Mammary epithelial cell (primary cell): ENCODE measurements at regions of chr15 and their contacts with region 1.

Region 1: DNA sequence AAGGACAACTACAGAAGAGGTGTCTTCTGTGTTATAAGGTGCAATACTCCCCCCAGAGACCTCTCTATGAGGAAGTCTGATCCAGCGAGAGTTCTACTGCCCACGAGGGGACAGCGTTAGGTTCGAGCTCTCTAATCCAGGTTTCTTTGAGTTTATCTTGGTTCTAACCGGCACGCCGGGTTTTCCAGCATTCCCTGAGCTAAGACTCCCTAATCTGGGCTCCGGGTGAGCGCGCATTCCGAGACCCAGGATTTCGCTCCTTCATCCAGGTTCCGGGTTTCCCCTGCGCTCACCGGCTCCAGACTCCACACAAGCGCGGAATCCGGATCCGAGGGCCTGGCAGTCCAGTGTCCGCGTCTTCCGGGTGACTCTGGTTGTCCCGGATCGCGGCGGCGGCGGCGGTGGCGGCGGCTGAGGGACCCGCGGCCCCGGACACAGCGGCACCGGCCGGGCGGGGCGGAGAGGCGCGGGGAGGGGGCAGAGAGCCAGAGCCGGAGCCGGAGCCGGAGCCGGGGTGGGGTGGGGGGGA is at the start of gene ZNF609:
- DNase-seq: peak; percentile 94
- H3K4me3 ChIP-seq: peak within 1 kb of the TSS; percentile 51 to 67 (median 63)
- H3K27ac ChIP-seq: peak within 1 kb of the TSS; percentile 39
- H3K4me1 ChIP-seq: peaks cover 8% of the 10 kb centered on the region
- H3K27me3 ChIP-seq: no peaks in the 10 kb centered on the region
- CTCF ChIP-seq: no peak
- total RNA-seq, gene ZNF609: 24.3 to 38.1 TPM

Region 2: DNA sequence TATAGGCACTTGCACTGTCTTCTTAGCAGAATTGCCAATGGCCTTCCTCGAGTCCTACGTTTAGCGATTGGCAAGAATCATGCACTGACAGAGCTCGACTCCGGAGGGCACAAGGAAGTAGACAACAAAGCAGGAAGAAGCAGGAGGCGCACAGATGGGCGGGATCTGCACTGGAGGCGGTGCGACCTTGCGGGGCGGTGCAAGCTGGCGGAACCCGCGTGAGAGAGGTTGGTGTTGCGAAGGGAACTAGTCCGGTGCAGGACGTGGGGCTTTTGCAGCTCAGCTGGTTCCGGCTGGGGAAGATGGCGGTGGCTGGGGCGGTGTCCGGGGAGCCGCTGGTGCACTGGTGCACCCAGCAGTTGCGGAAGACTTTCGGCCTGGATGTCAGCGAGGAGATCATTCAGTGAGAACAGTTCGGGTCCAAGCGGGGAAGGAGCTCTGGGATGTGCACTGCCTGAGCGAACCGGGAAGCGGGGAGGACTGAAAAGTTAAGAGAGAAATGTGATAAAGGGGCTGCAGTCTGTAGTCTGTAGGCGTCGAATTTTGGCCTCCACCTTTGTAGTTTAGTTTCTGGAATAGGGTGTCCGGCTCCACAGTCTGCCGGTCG is 72.6 kb before region 1 on chr15 and contains the start of gene TRIP4:
- CTCF ChIA-PET with region 1: no interaction called
- dilution Hi-C with region 1: no loop called
- in situ Hi-C with region 1: no loop called
- intact Hi-C with region 1: loop called (anchors 2 kb)
- DNase-seq: peak; percentile 96
- H3K4me3 ChIP-seq: peak within 1 kb of the TSS; percentile 79 to 90 (median 88)
- H3K27ac ChIP-seq: peak within 1 kb of the TSS; percentile 42
- H3K4me1 ChIP-seq: no peaks in the 10 kb centered on the region
- H3K27me3 ChIP-seq: no peaks in the 10 kb centered on the region
- CTCF ChIP-seq: peak in 1 of 2 donors; percentile 10
- total RNA-seq, gene TRIP4: 15.3 to 28.4 TPM

Region 3: DNA sequence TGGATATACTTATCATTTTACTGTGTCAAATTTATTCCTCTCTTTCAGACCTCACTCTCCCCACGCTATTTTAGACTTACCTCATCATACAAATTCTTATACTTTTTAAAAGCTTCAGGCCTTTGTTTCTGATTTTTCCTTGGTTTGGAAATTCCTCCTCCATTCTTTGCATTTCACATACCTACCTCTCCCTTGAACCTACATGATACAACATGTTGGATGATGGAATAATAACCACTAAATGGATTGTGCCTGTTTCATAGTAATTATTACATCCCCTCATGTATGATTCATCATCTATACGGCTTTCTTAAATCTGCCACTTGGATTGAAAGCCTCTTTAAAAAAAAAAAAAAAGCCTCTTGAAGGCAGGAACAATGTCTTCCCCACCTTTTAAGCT is 48.1 kb before region 1 on chr15:
- CTCF ChIA-PET with region 1: no interaction called
- dilution Hi-C with region 1: no loop called
- in situ Hi-C with region 1: no loop called
- intact Hi-C with region 1: loop called (anchors 1 kb)
- DNase-seq: peak; percentile 90
- H3K4me3 ChIP-seq: no peak overlapping the region
- H3K27ac ChIP-seq: peak overlapping the region; percentile 94
- H3K4me1 ChIP-seq: peaks cover 6% of the 10 kb centered on the region
- H3K27me3 ChIP-seq: no peaks in the 10 kb centered on the region
- CTCF ChIP-seq: no peak

Region 4: GRCh38 chr15:64443747-64444621 is 16.3 kb before region 1 on chr15:
- CTCF ChIA-PET with region 1: no interaction called
- dilution Hi-C with region 1: no loop called
- in situ Hi-C with region 1: no loop called
- intact Hi-C with region 1: loop called (anchors 1 kb)
- DNase-seq: peak; percentile 87
- H3K4me3 ChIP-seq: peak overlapping the region in 2 of 3 experiments; percentile 43 to 49
- H3K27ac ChIP-seq: peak overlapping the region; percentile 78
- H3K4me1 ChIP-seq: peaks cover 23% of the 10 kb centered on the region
- H3K27me3 ChIP-seq: no peaks in the 10 kb centered on the region
- CTCF ChIP-seq: no peak

Region 5: GRCh38 chr15:64503197-64503596 is 42.9 kb after region 1 on chr15:
- CTCF ChIA-PET with region 1: no interaction called
- dilution Hi-C with region 1: loop called (anchors 5 kb)
- in situ Hi-C with region 1: no loop called
- intact Hi-C with region 1: no loop called
- DNase-seq: no peak
- H3K4me3 ChIP-seq: no peak overlapping the region
- H3K27ac ChIP-seq: no peak overlapping the region
- H3K4me1 ChIP-seq: peaks cover 6% of the 10 kb centered on the region
- H3K27me3 ChIP-seq: no peaks in the 10 kb centered on the region
- CTCF ChIP-seq: no peak